HEK293T (cell line): ENCODE measurements at regions of chr1 and their contacts with region 1.

Region 1: GRCh38 chr1:45569962-45570581 is 13.8 kb upstream of the NASP start:
- DNase-seq: peak; percentile 78

Region 2: DNA sequence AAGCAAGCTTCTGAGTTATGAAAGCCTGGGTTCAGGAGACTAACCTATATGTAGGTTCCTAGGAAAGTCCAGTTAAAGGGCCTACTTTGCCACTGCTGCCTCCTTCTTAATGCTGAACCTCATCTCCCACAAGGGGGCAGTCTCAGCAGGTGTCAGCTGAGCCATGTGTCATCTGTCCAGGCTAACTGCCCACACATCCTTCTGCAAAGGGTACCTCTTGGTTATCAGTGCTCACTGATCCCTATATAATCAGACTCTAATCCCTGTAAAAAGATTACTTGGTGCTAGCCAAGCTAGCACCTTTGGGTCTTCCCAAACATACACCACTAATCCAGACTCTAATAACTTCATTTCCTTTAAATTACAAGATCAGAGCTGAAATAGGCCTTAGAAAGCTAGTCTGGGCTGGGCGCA is 57.4 kb before region 1 on chr1:
- CTCF ChIA-PET with region 1: interaction called, 46 read pairs
- POLR2A ChIA-PET with region 1: interaction called, 19 read pairs
- DNase-seq: peak; percentile 60